Activated CD4-positive, alpha-beta memory T cell treated with anti-CD3 and anti-CD28 coated beads, Interleukin-2, amount 10 ng/mL, durations not matched to agents 7 days and 5 days (primary cell): ENCODE measurements at regions of chr7 and their contacts with region 1.

Region 1: DNA sequence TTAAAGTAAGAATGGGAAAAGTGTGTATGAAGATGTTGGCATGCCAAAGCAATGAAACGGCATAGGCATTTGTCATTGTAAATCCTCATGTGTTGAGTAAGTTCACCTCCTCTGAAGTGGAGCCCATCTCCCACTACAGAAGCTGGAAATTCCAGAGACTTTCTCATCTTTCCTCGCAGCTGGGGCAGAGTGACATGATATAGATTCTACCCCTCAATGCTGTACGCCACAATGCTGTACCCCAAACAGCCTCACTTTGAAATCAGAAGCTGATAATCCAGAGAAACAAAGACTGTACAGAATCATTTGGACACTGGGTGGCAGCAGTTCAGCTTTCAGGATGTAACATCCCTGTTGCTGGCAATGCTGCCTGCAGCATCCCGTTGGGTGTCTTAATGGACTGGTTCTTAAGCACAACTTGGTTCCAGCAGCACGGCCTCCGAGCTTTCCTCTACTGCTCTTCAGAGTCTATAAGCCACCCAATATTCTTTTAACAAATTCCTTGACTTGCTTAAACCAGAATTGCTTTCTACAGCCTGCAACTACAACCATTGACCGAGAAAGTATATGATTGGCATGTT is 18.8 kb downstream of the ZC3HAV1L start:
- DNase-seq: peak; percentile 74
- H3K4me3 Mint-ChIP-seq: no peak overlapping the region
- H3K27ac Mint-ChIP-seq: no peak overlapping the region
- H3K4me1 Mint-ChIP-seq: peaks cover 12% of the 10 kb centered on the region
- H3K27me3 Mint-ChIP-seq: peaks cover 21% of the 10 kb centered on the region

Region 2: GRCh38 chr7:138999414-138999813 is 17.6 kb before region 1 on chr7:
- CTCF ChIA-PET with region 1: no interaction called
- POLR2A ChIA-PET with region 1: no interaction called
- DNase-seq: no peak
- H3K4me3 Mint-ChIP-seq: no peak overlapping the region
- H3K27ac Mint-ChIP-seq: no peak overlapping the region
- H3K4me1 Mint-ChIP-seq: peaks cover 5% of the 10 kb centered on the region
- H3K27me3 Mint-ChIP-seq: peaks cover 28% of the 10 kb centered on the region

Region 3: DNA sequence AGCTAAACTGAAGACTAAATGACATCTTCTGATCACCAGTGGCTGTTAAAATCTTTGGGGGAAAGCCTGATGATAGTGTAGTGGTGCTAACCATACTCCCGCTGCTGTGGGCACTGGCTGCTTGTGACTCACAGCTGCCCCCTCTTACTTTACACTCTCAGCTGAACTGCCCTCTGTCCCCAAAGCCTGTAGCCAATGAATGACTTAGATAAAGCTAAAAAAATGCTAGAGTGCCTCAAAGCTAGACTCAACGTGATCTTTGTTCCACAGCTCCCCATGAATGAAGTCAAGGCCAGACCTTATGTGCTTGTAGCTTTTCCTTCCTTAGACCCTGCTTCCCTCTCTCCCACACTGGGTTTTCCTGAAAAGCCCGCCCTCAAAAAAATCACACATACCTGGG is 12.3 kb after region 1 on chr7:
- CTCF ChIA-PET with region 1: interaction called, 17 read pairs
- POLR2A ChIA-PET with region 1: interaction called, 5 read pairs
- DNase-seq: peak; percentile 2
- H3K4me3 Mint-ChIP-seq: no peak overlapping the region
- H3K27ac Mint-ChIP-seq: no peak overlapping the region
- H3K4me1 Mint-ChIP-seq: peaks cover 19% of the 10 kb centered on the region
- H3K27me3 Mint-ChIP-seq: no peaks in the 10 kb centered on the region

Region 4: DNA sequence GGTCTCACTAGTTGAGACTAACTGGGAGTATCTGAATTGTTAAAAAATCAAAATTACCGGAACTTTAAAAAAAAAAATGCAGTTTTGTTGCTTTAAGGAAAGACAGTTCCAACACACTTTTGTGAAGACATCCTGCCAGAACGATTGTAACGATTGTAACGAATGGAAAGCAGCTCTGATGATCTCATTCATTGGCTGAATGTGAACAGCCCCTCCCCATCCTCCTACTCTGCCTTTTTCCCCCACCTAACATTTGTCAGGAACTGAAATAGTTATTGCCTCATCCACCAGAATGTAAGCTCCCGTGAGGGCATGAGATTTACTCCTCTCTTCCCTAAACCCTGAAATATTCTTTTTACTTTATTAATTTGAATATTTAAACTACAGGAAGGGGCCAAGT is 41.9 kb after region 1 on chr7:
- CTCF ChIA-PET with region 1: interaction called, 17 read pairs
- POLR2A ChIA-PET with region 1: no interaction called
- DNase-seq: no peak
- H3K4me3 Mint-ChIP-seq: no peak overlapping the region
- H3K27ac Mint-ChIP-seq: peak overlapping the region; percentile 53
- H3K4me1 Mint-ChIP-seq: peaks cover 62% of the 10 kb centered on the region
- H3K27me3 Mint-ChIP-seq: no peaks in the 10 kb centered on the region

Region 5: GRCh38 chr7:139084709-139085108 is 67.7 kb after region 1 on chr7:
- CTCF ChIA-PET with region 1: no interaction called
- POLR2A ChIA-PET with region 1: no interaction called
- DNase-seq: no peak
- H3K4me3 Mint-ChIP-seq: no peak overlapping the region
- H3K27ac Mint-ChIP-seq: peak overlapping the region; percentile 70
- H3K4me1 Mint-ChIP-seq: peaks cover 94% of the 10 kb centered on the region
- H3K27me3 Mint-ChIP-seq: no peaks in the 10 kb centered on the region